ENCODE measurements at regions of chr11 and their contacts with region 1.

Region 1: DNA sequence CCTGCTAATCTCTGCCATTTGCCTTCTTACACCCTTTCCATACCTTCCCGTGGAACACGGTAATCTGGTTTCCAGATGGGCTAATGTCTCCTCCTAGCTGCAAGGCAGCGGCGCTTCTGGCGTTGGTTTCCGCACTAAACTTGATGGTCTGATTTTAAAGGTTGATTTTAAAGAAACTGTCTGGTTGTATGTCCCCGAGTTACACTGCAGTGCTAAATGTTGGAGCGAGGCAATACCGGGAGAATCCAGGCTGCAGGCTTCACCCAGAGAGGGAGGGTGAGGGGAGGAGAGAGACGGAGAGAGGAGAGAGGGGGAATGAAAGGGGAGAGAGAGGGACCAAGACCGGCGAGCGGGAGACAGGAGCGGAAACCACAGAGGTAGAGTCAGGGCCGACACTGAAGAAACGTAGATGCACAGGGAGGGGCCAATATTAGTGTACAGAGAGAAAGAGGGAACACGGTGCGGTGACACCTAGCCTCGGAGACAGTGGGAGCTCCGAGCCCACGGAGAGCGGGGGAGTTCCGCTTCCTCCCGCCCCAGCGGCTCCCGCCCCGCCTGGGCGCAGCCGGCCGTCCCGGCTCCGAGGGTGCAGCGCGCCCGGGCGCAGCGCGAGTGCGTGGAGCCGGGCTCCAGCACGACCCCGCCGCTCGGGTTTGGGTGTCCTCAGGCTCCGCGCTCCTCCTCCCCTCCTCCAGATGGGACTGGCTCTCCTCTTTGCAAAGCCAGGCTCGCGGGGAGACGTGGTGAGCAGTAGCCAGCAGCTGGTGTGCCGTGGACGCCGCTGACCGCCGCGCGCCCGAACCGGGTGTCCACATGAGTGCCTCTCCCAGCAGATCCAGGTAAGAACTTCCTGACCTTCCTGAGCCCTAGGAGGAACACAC is 71.9 kb upstream of the GRAMD1B start:
- DNase-seq: peak; percentile 34
- ATAC-seq: peak; percentile 80
- H3K4me3 ChIP-seq: peak overlapping the region; percentile 91
- H3K27ac ChIP-seq: peak overlapping the region; percentile 27; the same call in 1 of the 2 replicates
- H3K4me1 ChIP-seq: peaks cover 7% of the 10 kb centered on the region; the same call in 1 of the 2 replicates
- H3K27me3 ChIP-seq: no peaks in the 10 kb centered on the region
- CTCF ChIP-seq: peak; percentile 20 to 43 (median 27); a peak in 4 of 6 replicates
- EP300 ChIP-seq: no peak
- POLR2A ChIP-seq: peak; percentile 76
- RAD21 ChIP-seq: peak; percentile 56

Region 2: GRCh38 chr11:123103326-123103980 is 254.7 kb before region 1 on chr11:
- CTCF ChIA-PET with region 1: no interaction called
- POLR2A ChIA-PET with region 1: no interaction called
- RAD21 ChIA-PET with region 1: no interaction called
- SMC1A ChIA-PET with region 1: no interaction called
- in situ Hi-C with region 1: no loop called
- intact Hi-C with region 1: no loop called
- DNase-seq: no peak
- ATAC-seq: peak; percentile 82
- H3K4me3 ChIP-seq: no peak overlapping the region
- H3K27ac ChIP-seq: no peak overlapping the region
- H3K4me1 ChIP-seq: no peaks in the 10 kb centered on the region
- H3K27me3 ChIP-seq: peaks cover 0 to 2% of the 10 kb centered on the region in 2 experiments; a peak in 1 of 4 replicates
- CTCF ChIP-seq: peak; percentile 49 to 59 (median 58); a peak in 5 of 6 replicates
- EP300 ChIP-seq: no peak
- POLR2A ChIP-seq: no peak
- RAD21 ChIP-seq: peak; percentile 66

Region 3: GRCh38 chr11:123373754-123374621 is 15.8 kb after region 1 on chr11:
- CTCF ChIA-PET with region 1: interaction called, 7 read pairs
- POLR2A ChIA-PET with region 1: interaction called, 5 read pairs
- RAD21 ChIA-PET with region 1: interaction called, 5 read pairs
- SMC1A ChIA-PET with region 1: interaction called, 25 read pairs
- in situ Hi-C with region 1: no loop called
- intact Hi-C with region 1: no loop called
- DNase-seq: no peak
- ATAC-seq: peak; percentile 55
- H3K4me3 ChIP-seq: no peak overlapping the region
- H3K27ac ChIP-seq: no peak overlapping the region; the same call in 1 of the 2 replicates
- H3K4me1 ChIP-seq: peaks cover 11% of the 10 kb centered on the region; the same call in 1 of the 2 replicates
- H3K27me3 ChIP-seq: no peaks in the 10 kb centered on the region
- CTCF ChIP-seq: no peak
- EP300 ChIP-seq: no peak
- POLR2A ChIP-seq: no peak
- RAD21 ChIP-seq: no peak

Region 4: DNA sequence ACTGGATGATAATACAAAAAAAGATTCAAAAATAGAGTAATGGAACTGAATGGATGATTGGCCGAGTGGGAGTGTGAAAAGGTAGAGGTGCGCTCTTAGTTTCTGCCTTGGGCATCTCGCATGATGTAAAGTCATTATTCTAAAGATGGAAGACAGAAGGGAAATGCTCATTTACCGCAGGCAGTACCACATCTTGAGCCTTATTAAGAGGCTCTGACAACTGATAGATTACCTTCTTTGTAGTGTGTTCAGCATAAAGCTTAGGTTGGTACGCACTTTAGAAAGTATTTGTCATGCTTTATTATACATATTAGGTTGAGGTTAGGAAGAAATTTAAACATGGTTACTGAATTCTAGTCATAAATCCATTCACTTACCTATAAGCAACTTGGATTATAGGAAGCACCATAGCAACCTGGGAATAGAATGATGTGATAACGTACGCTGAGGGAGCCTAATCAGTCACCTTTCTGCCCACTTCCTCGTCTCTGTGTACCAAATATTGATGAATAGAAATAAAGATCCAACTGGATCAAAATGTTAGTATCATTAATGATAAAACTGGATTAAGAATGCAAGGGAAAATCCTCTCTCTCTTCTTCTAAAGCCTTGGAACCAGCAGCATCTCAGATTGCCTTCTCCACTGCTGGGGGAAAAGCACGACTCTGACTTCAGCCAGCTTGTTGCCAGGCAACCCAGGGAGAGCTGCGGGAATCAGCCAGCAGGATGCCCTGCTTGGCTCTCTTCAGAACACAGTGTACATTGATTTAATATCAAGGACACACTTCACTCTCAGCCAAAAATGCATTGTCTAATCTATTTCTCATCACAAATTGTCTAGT is 728.0 kb after region 1 on chr11:
- CTCF ChIA-PET with region 1: no interaction called
- POLR2A ChIA-PET with region 1: no interaction called
- RAD21 ChIA-PET with region 1: no interaction called
- SMC1A ChIA-PET with region 1: no interaction called
- in situ Hi-C with region 1: no loop called
- intact Hi-C with region 1: no loop called
- DNase-seq: no peak
- ATAC-seq: no peak
- H3K4me3 ChIP-seq: no peak overlapping the region
- H3K27ac ChIP-seq: no peak overlapping the region
- H3K4me1 ChIP-seq: no peaks in the 10 kb centered on the region
- H3K27me3 ChIP-seq: peaks cover 0 to 2% of the 10 kb centered on the region in 2 experiments; a peak in 1 of 4 replicates
- CTCF ChIP-seq: no peak
- EP300 ChIP-seq: no peak
- POLR2A ChIP-seq: no peak
- RAD21 ChIP-seq: no peak